ENCODE measurements at regions of chr5 and their contacts with region 1.

Region 1: DNA sequence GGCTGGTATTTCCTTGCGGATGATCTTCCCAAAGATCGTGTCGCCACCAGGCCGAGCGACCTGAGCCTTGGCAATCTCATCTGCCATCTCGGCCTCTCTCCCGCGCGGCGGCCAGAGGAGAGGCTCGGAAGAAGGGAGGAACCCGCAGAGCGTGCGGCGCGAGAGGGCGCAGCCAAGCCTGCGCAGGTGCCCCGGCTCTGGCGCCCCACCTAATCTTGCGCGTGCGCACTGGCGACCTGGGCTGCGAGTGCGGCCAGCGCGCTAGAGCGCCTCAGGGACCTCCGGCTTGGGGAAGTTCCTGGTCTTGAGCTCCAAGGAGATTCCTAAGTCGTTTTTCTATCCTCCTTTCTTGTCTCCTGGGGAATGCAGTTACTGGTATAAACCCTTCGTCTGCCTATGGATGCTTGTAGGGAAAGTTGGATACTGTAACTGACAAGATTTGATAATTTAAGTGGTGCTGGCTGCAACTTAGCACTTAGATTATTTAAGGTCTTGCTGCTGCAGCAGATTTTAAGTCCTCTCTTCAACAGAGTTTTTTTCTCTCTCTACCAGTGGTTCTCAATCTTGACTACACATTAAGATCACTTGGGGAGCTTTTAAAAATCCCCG is at the start of gene HINT1:
- DNase-seq: peak; percentile 84
- ATAC-seq: peak; percentile 87
- H3K4me3 ChIP-seq: peak within 1 kb of the TSS; percentile 88
- H3K27ac ChIP-seq: peak within 1 kb of the TSS; percentile 92
- H3K4me1 ChIP-seq: peaks cover 3% of the 10 kb centered on the region; the same call in 1 of the 2 replicates
- H3K27me3 ChIP-seq: no peaks in the 10 kb centered on the region
- CTCF ChIP-seq: 0 out of 2 replicates have a peak, but pooled peaks have one; percentile 23
- POLR2A ChIP-seq: peak; percentile 66
- RAD21 ChIP-seq: peak; percentile 25; the same call in 1 of the 2 replicates
- total RNA-seq, gene HINT1: 179 and 181 TPM in 2 replicates

Region 2: DNA sequence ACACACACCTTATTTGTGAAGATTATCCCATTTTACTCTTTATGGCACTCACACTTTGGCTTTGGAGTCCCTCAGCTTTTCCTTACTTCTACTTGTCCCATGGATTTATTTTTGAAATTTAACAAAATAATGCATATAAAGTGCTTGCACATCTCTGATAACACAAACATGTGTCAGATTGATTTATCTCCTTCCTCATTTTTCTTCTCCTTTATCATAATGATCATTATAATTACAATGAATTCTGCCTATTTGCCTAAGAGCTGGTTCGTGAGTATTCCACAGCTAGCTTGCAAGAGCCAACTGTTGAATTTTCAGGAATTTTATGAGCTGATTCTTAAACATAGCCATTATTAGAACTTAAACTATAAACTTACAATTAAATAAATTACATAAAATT is 913.3 kb before region 1 on chr5:
- CTCF ChIA-PET with region 1: no interaction called
- POLR2A ChIA-PET with region 1: no interaction called
- dilution Hi-C with region 1: no loop called
- in situ Hi-C with region 1: no loop called
- intact Hi-C with region 1: no loop called
- DNase-seq: no peak
- ATAC-seq: no peak
- H3K4me3 ChIP-seq: no peak overlapping the region
- H3K27ac ChIP-seq: no peak overlapping the region
- H3K4me1 ChIP-seq: no peaks in the 10 kb centered on the region
- H3K27me3 ChIP-seq: no peaks in the 10 kb centered on the region
- CTCF ChIP-seq: no peak
- POLR2A ChIP-seq: no peak
- RAD21 ChIP-seq: no peak

Region 3: DNA sequence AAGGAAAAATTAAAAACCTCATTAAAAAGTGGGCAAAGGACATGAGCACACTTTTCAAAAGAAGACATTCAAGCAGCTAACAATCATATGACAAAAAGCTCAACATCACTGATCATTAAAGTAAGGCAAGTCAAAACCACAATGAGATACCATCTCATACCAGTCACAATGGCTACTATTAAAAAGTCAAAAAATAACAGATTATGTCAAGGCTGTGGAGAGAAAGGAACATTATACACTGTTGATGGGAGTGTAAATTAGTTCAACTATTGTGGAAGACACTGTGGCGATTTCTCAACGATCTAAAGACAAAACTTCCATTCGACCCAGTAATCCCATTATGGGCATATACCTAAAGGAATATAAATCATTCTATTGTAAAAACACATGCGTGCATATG is 35.9 kb before region 1 on chr5:
- CTCF ChIA-PET with region 1: no interaction called
- POLR2A ChIA-PET with region 1: no interaction called
- dilution Hi-C with region 1: no loop called
- in situ Hi-C with region 1: no loop called
- intact Hi-C with region 1: no loop called
- DNase-seq: no peak
- ATAC-seq: no peak
- H3K4me3 ChIP-seq: no peak overlapping the region
- H3K27ac ChIP-seq: no peak overlapping the region
- H3K4me1 ChIP-seq: no peaks in the 10 kb centered on the region
- H3K27me3 ChIP-seq: no peaks in the 10 kb centered on the region
- CTCF ChIP-seq: no peak
- POLR2A ChIP-seq: no peak
- RAD21 ChIP-seq: no peak

Region 4: GRCh38 chr5:131263648-131264450 is 98.6 kb after region 1 on chr5 and contains the start of gene CDC42SE2:
- CTCF ChIA-PET with region 1: interaction called, 5 read pairs
- POLR2A ChIA-PET with region 1: interaction called, 6 read pairs
- dilution Hi-C with region 1: no loop called
- in situ Hi-C with region 1: no loop called
- intact Hi-C with region 1: loop called (anchors 1 kb)
- DNase-seq: peak; percentile 80
- ATAC-seq: peak; percentile 98
- H3K4me3 ChIP-seq: peak within 1 kb of the TSS; percentile 99
- H3K27ac ChIP-seq: peak within 1 kb of the TSS; percentile 91
- H3K4me1 ChIP-seq: peaks cover 3% of the 10 kb centered on the region
- H3K27me3 ChIP-seq: no peaks in the 10 kb centered on the region
- CTCF ChIP-seq: no peak
- POLR2A ChIP-seq: peak; percentile 83
- RAD21 ChIP-seq: peak; percentile 15; the same call in 1 of the 2 replicates
- total RNA-seq, gene CDC42SE2: 19.4 and 44.2 TPM in 2 replicates

Region 5: DNA sequence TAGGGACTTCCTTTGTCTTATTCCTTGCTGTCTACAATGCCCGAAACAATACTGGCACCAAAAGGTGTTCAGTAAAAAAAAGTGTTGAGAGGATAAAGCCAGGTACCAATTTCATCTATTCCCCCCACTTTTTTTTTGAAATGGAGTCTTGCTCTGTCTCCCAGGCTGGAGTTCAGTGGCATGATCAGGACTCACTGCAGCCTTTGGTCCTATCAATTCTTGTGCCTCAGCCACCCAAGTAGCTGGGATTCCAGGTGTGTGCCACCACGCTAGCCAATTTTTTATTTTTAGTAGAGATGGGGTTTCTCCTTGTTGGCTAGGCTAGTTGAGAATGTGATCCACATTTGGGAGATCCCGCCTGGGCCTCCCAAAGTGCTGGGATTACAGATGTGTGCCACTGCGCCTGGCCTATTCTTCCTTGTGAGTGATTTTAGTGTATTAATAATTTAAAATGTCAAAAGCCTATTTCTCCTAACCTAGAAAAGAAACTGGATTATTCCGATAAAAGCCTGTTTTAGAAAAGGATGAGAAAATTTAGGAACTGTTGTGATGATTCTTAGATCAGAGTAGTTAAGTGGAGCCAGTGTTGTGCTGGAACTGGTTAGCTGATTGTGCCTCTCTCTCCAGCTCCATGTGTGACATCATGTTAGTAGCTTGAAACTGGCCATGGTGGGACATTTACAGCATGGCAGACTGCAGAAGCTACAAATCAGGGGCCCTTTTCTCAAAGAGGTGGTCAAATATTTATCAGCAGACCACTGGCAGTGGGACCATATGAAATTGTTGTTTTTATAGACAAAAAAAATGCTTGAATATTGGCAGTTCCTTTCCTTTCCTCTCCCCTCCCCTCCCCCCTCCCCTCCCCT is 112.9 kb after region 1 on chr5:
- CTCF ChIA-PET with region 1: no interaction called
- POLR2A ChIA-PET with region 1: no interaction called
- dilution Hi-C with region 1: no loop called
- in situ Hi-C with region 1: loop called (anchors 10 kb)
- intact Hi-C with region 1: no loop called
- DNase-seq: peak; percentile 24
- ATAC-seq: peak; percentile 33; the same call in 1 of the 2 replicates
- H3K4me3 ChIP-seq: no peak overlapping the region
- H3K27ac ChIP-seq: no peak overlapping the region
- H3K4me1 ChIP-seq: peaks cover 4% of the 10 kb centered on the region; the same call in 1 of the 2 replicates
- H3K27me3 ChIP-seq: no peaks in the 10 kb centered on the region
- CTCF ChIP-seq: no peak
- POLR2A ChIP-seq: no peak
- RAD21 ChIP-seq: no peak

Region 6: DNA sequence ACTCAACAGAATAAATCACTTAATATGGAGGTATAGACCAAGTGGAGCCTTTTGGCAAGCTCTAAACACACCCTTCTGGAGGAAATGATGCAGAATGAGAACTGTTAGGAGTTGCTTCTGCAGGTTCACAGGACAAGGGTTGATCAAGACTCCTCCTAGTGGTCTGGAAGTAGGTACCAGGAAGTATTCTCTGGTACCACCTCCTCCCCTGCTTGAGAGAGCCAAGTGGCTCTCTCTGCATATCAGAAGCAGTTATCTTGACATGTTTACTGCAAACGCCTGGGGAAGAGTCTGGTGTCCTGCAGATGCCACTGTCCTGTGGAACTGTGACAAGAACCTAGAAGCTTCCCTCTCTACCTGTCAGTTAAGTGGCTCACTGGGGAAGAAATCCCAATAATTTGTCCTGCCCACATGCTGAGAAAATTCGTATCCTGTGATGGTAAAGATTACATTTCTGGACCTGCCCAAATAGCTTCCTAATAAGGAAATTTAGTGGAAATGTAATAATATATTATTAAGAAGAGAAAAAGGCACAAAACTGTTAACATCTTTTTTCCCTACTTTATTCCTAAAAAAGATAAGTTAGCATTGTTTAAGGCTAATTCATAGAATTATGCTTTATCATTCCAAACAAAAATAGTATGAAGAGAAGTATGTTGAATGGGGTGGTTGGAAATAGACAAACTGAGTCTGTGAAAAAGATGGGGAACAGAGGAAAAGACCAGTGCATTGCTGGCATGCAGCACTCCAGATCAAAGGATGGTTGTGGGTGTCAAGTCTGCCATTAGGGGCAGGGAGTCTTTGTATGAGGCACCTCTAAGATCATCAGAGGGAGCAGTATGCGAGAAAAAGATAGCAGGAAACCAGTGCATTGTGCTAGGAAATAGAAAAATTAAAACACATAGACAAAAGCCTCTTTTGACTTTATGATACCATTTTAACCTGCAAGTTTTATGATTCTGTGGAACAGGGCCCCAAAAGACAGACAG is 217.5 kb after region 1 on chr5:
- CTCF ChIA-PET with region 1: interaction called, 5 read pairs
- POLR2A ChIA-PET with region 1: no interaction called
- dilution Hi-C with region 1: no loop called
- in situ Hi-C with region 1: loop called (anchors 10 kb)
- intact Hi-C with region 1: loop called (anchors 5 kb)
- DNase-seq: peak; percentile 58
- ATAC-seq: peak; percentile 42; the same call in 1 of the 2 replicates
- H3K4me3 ChIP-seq: no peak overlapping the region
- H3K27ac ChIP-seq: no peak overlapping the region
- H3K4me1 ChIP-seq: peaks cover 15% of the 10 kb centered on the region
- H3K27me3 ChIP-seq: no peaks in the 10 kb centered on the region
- CTCF ChIP-seq: peak; percentile 50
- POLR2A ChIP-seq: no peak
- RAD21 ChIP-seq: peak; percentile 68

Region 7: GRCh38 chr5:131400585-131400984 is 235.4 kb after region 1 on chr5:
- CTCF ChIA-PET with region 1: interaction called, 3 read pairs
- POLR2A ChIA-PET with region 1: no interaction called
- dilution Hi-C with region 1: no loop called
- in situ Hi-C with region 1: no loop called
- intact Hi-C with region 1: loop called (anchors 5 kb)
- DNase-seq: no peak
- ATAC-seq: no peak
- H3K4me3 ChIP-seq: no peak overlapping the region
- H3K27ac ChIP-seq: no peak overlapping the region
- H3K4me1 ChIP-seq: no peaks in the 10 kb centered on the region
- H3K27me3 ChIP-seq: no peaks in the 10 kb centered on the region
- CTCF ChIP-seq: no peak
- POLR2A ChIP-seq: no peak
- RAD21 ChIP-seq: no peak

Region 8: GRCh38 chr5:131417240-131417869 is 252.1 kb after region 1 on chr5:
- CTCF ChIA-PET with region 1: no interaction called
- POLR2A ChIA-PET with region 1: no interaction called
- dilution Hi-C with region 1: no loop called
- in situ Hi-C with region 1: no loop called
- intact Hi-C with region 1: loop called (anchors 1 kb)
- DNase-seq: peak; percentile 71
- ATAC-seq: peak; percentile 76
- H3K4me3 ChIP-seq: no peak overlapping the region
- H3K27ac ChIP-seq: no peak overlapping the region
- H3K4me1 ChIP-seq: no peaks in the 10 kb centered on the region
- H3K27me3 ChIP-seq: no peaks in the 10 kb centered on the region
- CTCF ChIP-seq: peak; percentile 84
- POLR2A ChIP-seq: no peak
- RAD21 ChIP-seq: peak; percentile 85